CD8-positive, alpha-beta memory T cell (primary cell): ENCODE measurements at regions of chr15 and their contacts with region 1.

Region 1: DNA sequence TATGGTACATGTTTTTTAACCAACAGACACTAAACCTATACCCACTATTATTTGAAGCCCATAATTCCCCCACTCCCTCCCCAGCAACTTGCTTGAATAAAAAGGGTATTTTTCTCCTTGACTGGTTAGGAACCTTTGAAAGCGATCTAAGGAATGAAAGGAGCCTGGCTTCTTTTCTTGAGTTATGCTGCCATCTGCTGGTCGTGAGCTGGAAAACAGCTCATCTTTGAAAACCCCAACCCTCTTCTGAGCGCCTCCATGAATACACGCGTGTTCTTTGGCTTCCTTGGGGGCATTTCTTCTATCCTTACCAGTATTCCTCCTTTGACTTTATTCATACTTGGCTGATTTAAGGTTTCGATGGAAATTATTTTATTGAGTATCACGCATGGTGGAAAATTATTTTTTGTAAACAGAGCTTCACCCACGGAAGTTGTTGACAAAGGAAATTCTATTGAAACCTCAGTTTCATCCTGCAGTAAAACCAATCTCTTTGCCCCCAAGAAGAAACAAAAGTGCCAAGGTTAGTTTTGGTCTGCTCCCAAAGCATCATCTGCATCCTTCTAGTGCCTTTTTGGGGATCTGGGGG is 171.6 kb downstream of the SV2B start:
- DNase-seq: peak; percentile 29 to 65 (median 39)
- H3K4me3 ChIP-seq: no peak overlapping the region
- H3K4me3 Mint-ChIP-seq: peak overlapping the region in 3 of 7 donors; percentile 53 to 65 (median 55)
- H3K27ac ChIP-seq: no peak overlapping the region
- H3K27ac Mint-ChIP-seq: peak overlapping the region in 3 of 8 donors; percentile 5 to 56 (median 34)
- H3K4me1 ChIP-seq: peaks cover 5% of the 10 kb centered on the region
- H3K4me1 Mint-ChIP-seq: peaks cover 4 to 9% (median 7%) of the 10 kb centered on the region in 3 donors
- H3K27me3 ChIP-seq: peaks cover 4% of the 10 kb centered on the region
- H3K27me3 Mint-ChIP-seq: peaks cover 17 to 20% of the 10 kb centered on the region in 2 donors

Region 2: DNA sequence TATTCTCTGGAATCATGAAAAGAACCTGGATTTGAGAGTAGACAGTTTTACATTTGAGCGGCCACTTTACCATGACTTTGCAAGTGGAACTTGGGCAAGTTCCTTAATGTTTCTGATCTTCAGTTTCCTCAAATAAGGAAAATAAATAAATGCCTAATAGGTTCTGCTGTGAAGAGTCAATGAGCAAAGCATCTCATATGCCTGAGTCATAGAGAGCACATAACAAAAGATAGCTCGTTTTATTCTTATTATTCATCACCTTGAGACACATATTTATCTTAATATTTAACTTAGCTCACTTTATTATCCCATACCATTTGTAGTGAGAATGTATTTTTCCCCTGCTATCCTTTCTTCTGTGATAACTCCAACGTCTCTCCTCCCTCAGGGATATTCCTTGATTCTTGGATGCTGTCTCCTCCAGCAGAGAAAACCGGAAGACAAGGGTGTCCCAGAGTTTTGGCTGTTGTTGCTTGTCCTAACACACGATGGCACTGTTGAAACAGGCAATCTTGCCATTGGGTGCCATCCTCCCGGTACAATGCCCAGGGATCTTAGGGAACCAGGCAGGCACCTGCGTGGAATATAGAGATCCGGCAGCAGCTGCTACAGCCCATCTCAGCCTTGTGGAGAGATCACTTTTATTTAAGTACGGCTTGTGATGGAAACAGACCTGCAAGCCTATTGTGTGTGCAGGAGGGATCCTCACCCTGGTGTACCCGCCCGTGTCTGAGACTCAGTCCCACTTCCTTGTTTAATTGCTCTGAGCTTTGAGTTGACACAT is 215.9 kb before region 1 on chr15:
- CTCF ChIA-PET with region 1: interaction called, 15 read pairs
- POLR2A ChIA-PET with region 1: no interaction called
- DNase-seq: peak in 1 of 5 donors; percentile 5
- H3K4me3 ChIP-seq: no peak overlapping the region
- H3K4me3 Mint-ChIP-seq: no peak overlapping the region
- H3K27ac ChIP-seq: no peak overlapping the region
- H3K27ac Mint-ChIP-seq: peak overlapping the region in 1 of 8 donors; percentile 2
- H3K4me1 ChIP-seq: no peaks in the 10 kb centered on the region
- H3K4me1 Mint-ChIP-seq: peaks cover 0 to 6% (median 5%) of the 10 kb centered on the region in 3 donors
- H3K27me3 ChIP-seq: peaks cover 8% of the 10 kb centered on the region
- H3K27me3 Mint-ChIP-seq: peaks cover 40 to 81% of the 10 kb centered on the region in 2 donors

Region 3: GRCh38 chr15:91255670-91256192 is 15.9 kb before region 1 on chr15:
- CTCF ChIA-PET with region 1: interaction called, 10 read pairs
- POLR2A ChIA-PET with region 1: no interaction called
- DNase-seq: no peak
- H3K4me3 ChIP-seq: no peak overlapping the region
- H3K4me3 Mint-ChIP-seq: no peak overlapping the region
- H3K27ac ChIP-seq: no peak overlapping the region
- H3K27ac Mint-ChIP-seq: no peak overlapping the region
- H3K4me1 ChIP-seq: no peaks in the 10 kb centered on the region
- H3K4me1 Mint-ChIP-seq: no peaks in the 10 kb centered on the region
- H3K27me3 ChIP-seq: no peaks in the 10 kb centered on the region
- H3K27me3 Mint-ChIP-seq: peaks cover 30 to 64% of the 10 kb centered on the region in 2 donors

Region 4: GRCh38 chr15:91302588-91303439 is 31.2 kb after region 1 on chr15:
- CTCF ChIA-PET with region 1: interaction called, 11 read pairs
- POLR2A ChIA-PET with region 1: no interaction called
- DNase-seq: peak in 3 of 5 donors; percentile 45 to 49 (median 48)
- H3K4me3 ChIP-seq: no peak overlapping the region
- H3K4me3 Mint-ChIP-seq: peak overlapping the region in 5 of 7 donors; percentile 19 to 68 (median 33)
- H3K27ac ChIP-seq: no peak overlapping the region
- H3K27ac Mint-ChIP-seq: peak overlapping the region in 2 of 8 donors; percentile 48 to 51
- H3K4me1 ChIP-seq: peaks cover 38% of the 10 kb centered on the region
- H3K4me1 Mint-ChIP-seq: peaks cover 33 to 47% (median 46%) of the 10 kb centered on the region in 3 donors
- H3K27me3 ChIP-seq: no peaks in the 10 kb centered on the region
- H3K27me3 Mint-ChIP-seq: peaks cover 18 to 30% of the 10 kb centered on the region in 2 donors